Activated B cell treated with CpG ODN at 0.5 μM for 24 hours (primary cell): ENCODE measurements at regions of chr21 and their contacts with region 1.

Region 1: DNA sequence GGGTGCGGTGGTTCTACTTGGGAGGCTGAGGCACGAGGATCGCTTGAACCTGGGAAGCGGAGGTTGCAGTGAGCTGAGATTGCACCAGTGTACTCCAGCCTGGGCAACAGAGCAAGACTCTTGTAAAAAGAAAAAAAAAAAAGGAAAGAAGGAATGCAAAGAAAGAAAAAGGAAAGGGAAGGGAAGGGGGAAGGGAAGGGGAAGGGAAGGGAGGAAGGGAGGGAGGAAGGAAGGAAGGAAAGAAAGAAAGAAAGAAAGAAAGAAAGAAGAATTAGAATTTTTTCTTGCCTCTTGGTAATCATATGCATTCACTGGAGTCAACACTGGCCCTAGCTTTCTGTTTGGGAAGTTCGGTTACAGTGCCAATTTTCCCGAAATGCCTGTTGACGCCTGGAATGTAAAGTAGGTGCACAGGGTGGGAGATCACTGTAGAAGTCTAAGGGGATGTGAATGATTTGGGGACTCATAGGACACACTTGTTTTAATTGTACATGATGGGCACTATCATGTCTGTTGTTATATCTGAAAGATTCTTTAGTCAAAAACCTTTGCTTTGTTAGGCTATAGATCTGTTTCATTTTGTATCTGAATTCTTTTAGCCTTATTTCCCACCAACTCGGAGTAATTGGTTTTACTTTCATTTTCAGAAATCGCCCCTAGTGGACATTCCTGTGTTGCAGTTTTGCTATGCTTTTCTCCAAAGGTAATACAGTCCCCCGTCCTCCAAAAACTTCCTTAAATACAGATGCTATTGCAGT is 59.8 kb upstream of the MORC3 start:
- DNase-seq: no peak
- ATAC-seq: peak; percentile 48
- H3K4me3 Mint-ChIP-seq: peak overlapping the region; percentile 82
- H3K27ac Mint-ChIP-seq: peak overlapping the region; percentile 96
- H3K4me1 Mint-ChIP-seq: peaks cover 91% of the 10 kb centered on the region
- H3K27me3 Mint-ChIP-seq: no peaks in the 10 kb centered on the region
- CTCF ChIP-seq: no peak

Region 2: GRCh38 chr21:36135391-36136102 is 124.7 kb before region 1 on chr21:
- CTCF ChIA-PET with region 1: no interaction called
- POLR2A ChIA-PET with region 1: interaction called, 11 read pairs
- intact Hi-C with region 1: no loop called
- DNase-seq: peak; percentile 64
- ATAC-seq: peak; percentile 82
- H3K4me3 Mint-ChIP-seq: peak overlapping the region; percentile 92
- H3K27ac Mint-ChIP-seq: peak overlapping the region; percentile 88
- H3K4me1 Mint-ChIP-seq: peaks cover 33% of the 10 kb centered on the region
- H3K27me3 Mint-ChIP-seq: no peaks in the 10 kb centered on the region
- CTCF ChIP-seq: no peak

Region 3: DNA sequence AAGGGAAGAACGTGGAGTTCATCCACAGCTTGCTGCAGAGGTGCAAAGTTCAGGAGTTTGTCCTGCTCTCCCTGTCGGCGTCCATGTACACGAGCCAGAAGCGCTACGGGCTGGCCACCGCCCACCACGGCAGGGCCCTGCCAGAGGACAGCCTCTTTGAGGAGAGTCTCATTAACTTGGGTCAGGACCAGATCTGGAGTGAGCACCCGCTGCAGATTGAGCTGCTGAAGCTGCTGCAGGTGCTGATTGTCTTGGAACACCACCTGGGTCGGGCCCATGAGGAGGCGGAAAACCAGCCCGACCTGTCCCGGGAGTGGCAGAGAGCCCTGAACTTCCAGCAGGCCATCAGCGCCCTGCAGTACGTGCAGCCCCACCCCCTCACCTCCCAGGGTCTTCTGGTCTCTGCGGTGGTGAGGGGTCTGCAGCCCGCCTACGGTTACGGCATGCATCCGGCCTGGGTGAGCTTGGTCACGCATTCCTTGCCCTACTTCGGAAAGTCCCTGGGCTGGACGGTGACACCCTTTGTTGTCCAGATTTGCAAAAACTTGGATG is 14.1 kb before region 1 on chr21:
- CTCF ChIA-PET with region 1: interaction called, 5 read pairs
- POLR2A ChIA-PET with region 1: interaction called, 19 read pairs
- intact Hi-C with region 1: no loop called
- DNase-seq: no peak
- ATAC-seq: no peak
- H3K4me3 Mint-ChIP-seq: no peak overlapping the region
- H3K27ac Mint-ChIP-seq: no peak overlapping the region
- H3K4me1 Mint-ChIP-seq: peaks cover 10% of the 10 kb centered on the region
- H3K27me3 Mint-ChIP-seq: no peaks in the 10 kb centered on the region
- CTCF ChIP-seq: no peak

Region 4: DNA sequence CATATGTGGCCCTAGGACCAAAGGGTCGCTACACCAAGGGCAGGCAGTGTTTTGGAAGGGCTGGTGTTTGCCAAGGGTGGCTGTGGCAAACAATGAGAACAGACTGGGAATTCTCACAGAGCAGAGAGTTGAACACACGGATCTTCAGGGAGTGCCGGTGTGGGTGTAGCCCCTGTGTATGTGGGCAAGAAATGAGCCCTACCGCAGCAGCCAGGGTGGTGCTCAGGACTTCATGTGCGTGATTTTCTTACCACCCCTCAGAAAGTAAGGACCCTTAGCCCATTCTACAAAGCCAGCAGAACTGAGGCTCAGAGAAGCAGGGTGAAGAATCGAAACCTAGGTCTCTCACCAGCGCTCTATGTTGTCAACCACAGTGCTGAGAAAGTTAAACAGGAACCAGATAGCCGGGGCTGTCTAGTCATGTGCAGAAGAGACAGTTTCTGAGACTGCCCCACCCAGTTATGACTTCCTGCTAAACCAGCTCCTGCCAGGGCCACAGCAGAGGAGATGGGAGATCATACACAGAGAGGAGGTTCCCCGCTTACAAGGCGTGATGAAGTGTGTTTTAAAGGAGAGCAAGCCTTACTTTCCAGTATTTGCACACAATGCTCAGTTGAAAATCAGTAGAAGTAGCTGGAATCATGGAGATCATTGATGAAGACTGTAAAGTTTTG is 37.8 kb after region 1 on chr21:
- CTCF ChIA-PET with region 1: interaction called, 5 read pairs
- POLR2A ChIA-PET with region 1: interaction called, 88 read pairs
- intact Hi-C with region 1: loop called (anchors 1 kb)
- DNase-seq: peak; percentile 46
- ATAC-seq: peak; percentile 95
- H3K4me3 Mint-ChIP-seq: peak overlapping the region; percentile 78
- H3K27ac Mint-ChIP-seq: peak overlapping the region; percentile 98
- H3K4me1 Mint-ChIP-seq: peaks cover 61% of the 10 kb centered on the region
- H3K27me3 Mint-ChIP-seq: no peaks in the 10 kb centered on the region
- CTCF ChIP-seq: no peak

Region 5: DNA sequence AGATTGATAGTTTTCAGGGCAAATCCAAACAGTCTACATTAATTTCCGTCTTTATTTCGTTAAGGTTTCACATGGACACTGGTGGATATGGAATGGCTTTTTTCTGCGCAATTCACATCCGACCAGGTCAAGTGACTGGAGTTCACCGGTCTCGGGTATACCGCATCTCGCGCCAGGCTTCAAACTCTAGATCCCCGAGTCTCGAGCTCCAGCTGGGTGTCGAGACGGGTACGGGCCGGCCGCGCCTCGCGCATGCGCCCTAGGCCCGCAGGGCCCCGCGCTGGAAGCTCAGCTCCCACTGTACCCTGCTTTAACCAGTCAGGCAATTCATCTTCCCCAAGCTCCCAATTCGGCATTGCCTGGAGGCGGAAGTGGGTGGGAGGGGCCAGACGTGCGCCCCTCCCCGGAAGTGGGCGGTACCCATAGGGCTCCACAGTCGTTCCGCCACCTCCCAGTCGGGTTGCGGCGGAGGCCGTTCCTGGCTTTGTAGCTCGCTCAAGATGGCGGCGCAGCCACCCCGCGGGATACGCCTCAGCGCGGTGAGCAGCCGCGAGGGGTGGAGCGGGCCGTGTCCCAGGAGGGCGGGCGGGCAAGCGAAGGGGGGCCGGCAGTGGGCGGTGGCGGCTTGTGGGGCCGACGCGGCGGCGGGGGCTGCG is 59.7 kb after region 1 on chr21 and contains the start of gene MORC3:
- CTCF ChIA-PET with region 1: interaction called, 19 read pairs
- POLR2A ChIA-PET with region 1: interaction called, 196 read pairs
- intact Hi-C with region 1: loop called (anchors 1 kb)
- DNase-seq: peak; percentile 98
- ATAC-seq: peak; percentile 88
- H3K4me3 Mint-ChIP-seq: peak within 1 kb of the TSS; percentile 97
- H3K27ac Mint-ChIP-seq: peak within 1 kb of the TSS; percentile 97
- H3K4me1 Mint-ChIP-seq: peaks cover 50% of the 10 kb centered on the region
- H3K27me3 Mint-ChIP-seq: no peaks in the 10 kb centered on the region
- CTCF ChIP-seq: no peak
- total RNA-seq, gene MORC3: 55.4 and 65.6 TPM in 2 replicates